ENCODE measurements at regions of chr11 and their contacts with region 1.

Region 1: GRCh38 chr11:11400635-11401232 is 47.7 kb upstream of the CSNK2A3 start:
- DNase-seq: peak in 1 of 2 experiments; percentile 70
- H3K4me3 ChIP-seq: no peak overlapping the region
- H3K27ac ChIP-seq: no peak overlapping the region
- H3K4me1 ChIP-seq: peaks cover 0 to 13% (median 4%) of the 10 kb centered on the region in 4 experiments; a peak in 4 of 7 replicates
- H3K27me3 ChIP-seq: no peaks in the 10 kb centered on the region; a peak in 1 of 7 replicates
- CTCF ChIP-seq: peak; percentile 72 to 87 (median 76)
- EP300 ChIP-seq: no peak
- POLR2A ChIP-seq: no peak
- RAD21 ChIP-seq: peak; percentile 79 to 86

Region 2: DNA sequence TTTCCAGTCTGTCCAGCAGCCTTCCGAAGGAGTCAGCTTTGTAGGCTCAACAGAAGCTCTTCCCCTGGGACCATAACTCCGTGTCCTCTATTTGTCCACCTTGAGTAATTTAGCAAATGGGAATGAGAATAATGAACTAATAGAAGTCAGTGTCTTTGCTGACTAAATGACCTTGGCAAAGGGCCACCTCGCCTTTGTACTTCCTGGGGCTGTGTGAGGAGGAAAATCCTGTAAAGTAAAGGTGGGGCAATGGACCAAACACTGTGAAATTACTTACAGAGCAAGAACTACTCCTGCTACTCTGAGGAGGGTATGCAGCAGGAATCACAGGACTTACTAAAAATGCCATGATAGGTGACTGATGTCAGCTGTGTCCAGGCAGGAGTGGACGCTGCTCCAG is 11.5 kb before region 1 on chr11:
- CTCF ChIA-PET with region 1: interaction called, 22 read pairs
- POLR2A ChIA-PET with region 1: no interaction called
- DNase-seq: no peak
- H3K4me3 ChIP-seq: no peak overlapping the region
- H3K27ac ChIP-seq: no peak overlapping the region
- H3K4me1 ChIP-seq: peaks cover 0 to 5% (median 3%) of the 10 kb centered on the region in 4 experiments; a peak in 4 of 7 replicates
- H3K27me3 ChIP-seq: 0 out of 7 replicates have a peak, but pooled peaks cover 0 to 2% (median 0%) of the 10 kb centered on the region in 4 experiments
- CTCF ChIP-seq: no peak
- EP300 ChIP-seq: no peak
- POLR2A ChIP-seq: no peak
- RAD21 ChIP-seq: no peak

Region 3: GRCh38 chr11:11414996-11415395 is 14.3 kb after region 1 on chr11:
- CTCF ChIA-PET with region 1: interaction called, 13 read pairs
- POLR2A ChIA-PET with region 1: interaction called, 3 read pairs
- DNase-seq: no peak
- H3K4me3 ChIP-seq: no peak overlapping the region
- H3K27ac ChIP-seq: no peak overlapping the region
- H3K4me1 ChIP-seq: peaks cover 0 to 6% (median 0%) of the 10 kb centered on the region in 4 experiments; a peak in 2 of 7 replicates
- H3K27me3 ChIP-seq: no peaks in the 10 kb centered on the region
- CTCF ChIP-seq: no peak
- EP300 ChIP-seq: no peak
- POLR2A ChIP-seq: no peak
- RAD21 ChIP-seq: no peak

Measured in H1 (cell line).